ENCODE measurements at regions of chr5 and their contacts with region 1.

Region 1: GRCh38 chr5:133552931-133553525 is 59.3 kb downstream of the FSTL4 start:
- DNase-seq: peak; percentile 39

Region 2: GRCh38 chr5:133727636-133728035 is 174.6 kb after region 1 on chr5:
- in situ Hi-C with region 1: no loop called
- DNase-seq: no peak

Region 3: GRCh38 chr5:133868946-133869518 is 316.0 kb after region 1 on chr5:
- in situ Hi-C with region 1: loop called (anchors 25 kb)
- DNase-seq: peak; percentile 41

Measured in Caki2 (cell line).